Posterior cingulate gyrus (tissue), 11 donors: ENCODE measurements at regions of chr6 and their contacts with region 1.

Region 1: DNA sequence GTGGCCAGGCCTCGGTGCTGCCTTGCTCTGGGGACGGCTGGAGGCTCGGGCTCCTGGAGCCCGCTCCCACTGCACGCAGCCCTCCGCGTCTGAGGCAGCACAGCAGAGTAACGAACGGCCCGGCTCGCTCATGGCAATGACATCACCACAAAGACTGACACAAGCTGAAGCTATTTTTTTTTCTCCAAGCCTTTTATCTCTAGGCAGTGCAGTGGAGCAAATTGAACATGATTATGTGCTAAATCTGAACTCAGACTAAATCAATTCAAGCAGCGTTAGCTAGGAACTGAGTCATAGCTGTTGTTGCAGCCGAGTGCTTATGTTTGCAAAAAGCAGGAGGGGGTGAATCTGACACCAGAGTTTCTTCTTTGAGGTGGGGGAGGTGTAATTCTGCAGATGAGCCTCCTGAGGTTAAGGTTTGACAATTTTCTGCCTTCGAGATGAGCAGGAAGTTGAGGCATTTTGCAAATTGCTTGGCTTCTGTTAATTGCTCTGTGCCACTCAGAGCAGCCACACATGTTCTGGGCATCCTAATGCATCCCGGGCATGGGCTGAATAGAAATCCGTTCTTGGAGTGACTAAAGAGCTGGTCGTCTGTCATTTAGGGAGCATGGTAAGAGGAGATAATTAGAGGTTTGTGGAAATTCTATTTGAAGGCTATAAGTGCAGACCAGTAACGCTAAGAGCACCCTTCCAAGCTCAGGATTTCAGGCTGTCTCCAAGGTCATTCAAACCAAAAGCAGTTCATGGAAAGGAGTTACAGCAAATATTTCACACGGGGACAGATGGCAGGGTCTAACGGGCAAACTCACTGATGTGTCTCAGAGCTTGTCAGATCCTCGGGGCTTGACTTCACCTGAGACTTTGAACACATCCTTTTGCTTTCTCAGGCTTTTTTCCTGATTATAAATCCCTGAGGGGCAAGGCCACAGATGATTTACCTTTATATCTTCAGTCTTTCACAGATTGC is 155.1 kb upstream of the ENPP5 start:
- DNase-seq: peak; percentile 62 to 96 (median 78)

Region 2: GRCh38 chr6:46376562-46377061 is 50.8 kb after region 1 on chr6:
- intact Hi-C with region 1: loop called (anchors 5 kb)
- DNase-seq: no peak